PC-3 (cell line): ENCODE measurements at regions of chr19 and their contacts with region 1.

Region 1: DNA sequence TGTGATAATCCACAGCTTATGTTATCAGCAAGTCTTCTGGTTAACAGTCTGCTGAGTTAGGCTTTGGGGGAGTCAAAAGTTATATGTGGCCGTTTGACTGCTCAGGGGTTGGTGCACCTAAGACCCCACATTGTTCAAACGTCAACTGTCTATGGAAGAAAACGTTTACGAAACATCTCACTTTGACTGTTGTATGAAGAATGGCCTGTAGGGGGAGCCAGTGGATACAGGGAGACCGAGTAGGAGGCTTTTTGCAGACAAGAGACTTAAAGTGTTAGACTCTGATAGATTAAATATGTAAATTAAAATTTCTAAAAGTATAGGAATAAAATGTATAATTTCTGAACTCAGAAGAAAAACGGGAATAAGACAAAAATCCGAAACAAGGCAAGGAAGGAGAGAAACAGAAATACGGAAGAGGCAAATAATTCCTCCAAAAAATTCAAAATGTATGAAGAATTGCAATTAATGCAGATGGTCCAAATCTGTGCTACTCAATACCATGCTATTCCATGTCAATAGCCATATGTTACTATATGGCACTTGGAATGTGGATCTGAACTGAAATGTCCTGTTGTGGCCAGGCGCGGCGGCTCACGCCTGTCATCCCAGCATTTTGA is 37.8 kb downstream of the TNFSF14 start:
- DNase-seq: peak; percentile 95
- ATAC-seq: peak; percentile 63
- H3K4me3 ChIP-seq: no peak overlapping the region
- H3K27ac ChIP-seq: no peak overlapping the region
- H3K4me1 ChIP-seq: no peaks in the 10 kb centered on the region
- H3K27me3 ChIP-seq: no peaks in the 10 kb centered on the region
- CTCF ChIP-seq: peak; percentile 88

Region 2: DNA sequence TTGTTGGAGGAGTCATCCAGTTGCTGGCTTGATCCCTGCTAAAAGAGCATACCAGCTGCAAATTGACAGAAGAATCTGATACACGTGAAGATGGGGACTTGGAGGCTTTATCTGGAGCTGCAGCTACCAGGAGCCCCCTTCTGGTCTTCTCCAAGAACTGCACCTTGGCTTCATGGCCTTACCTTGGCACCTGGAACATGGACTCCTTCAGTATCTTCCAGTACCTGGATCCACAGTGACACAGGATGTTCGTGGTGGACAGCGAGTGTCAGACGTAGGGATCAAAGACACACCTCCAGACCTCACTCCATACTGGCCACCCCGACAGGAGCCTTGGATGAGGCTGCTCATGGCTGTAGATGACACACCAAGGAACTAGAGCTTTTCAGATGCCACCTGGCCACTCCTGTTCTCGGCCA is 506.5 kb before region 1 on chr19:
- CTCF ChIA-PET with region 1: no interaction called
- POLR2A ChIA-PET with region 1: no interaction called
- intact Hi-C with region 1: loop called (anchors 2 kb)
- DNase-seq: peak; percentile 95
- ATAC-seq: peak; percentile 90
- H3K4me3 ChIP-seq: no peak overlapping the region
- H3K27ac ChIP-seq: no peak overlapping the region
- H3K4me1 ChIP-seq: no peaks in the 10 kb centered on the region
- H3K27me3 ChIP-seq: no peaks in the 10 kb centered on the region
- CTCF ChIP-seq: peak; percentile 99

Region 3: GRCh38 chr19:6516659-6517291 is 115.3 kb before region 1 on chr19:
- CTCF ChIA-PET with region 1: interaction called, 5 read pairs
- POLR2A ChIA-PET with region 1: no interaction called
- intact Hi-C with region 1: loop called (anchors 1 kb)
- DNase-seq: peak; percentile 93
- ATAC-seq: peak; percentile 86
- H3K4me3 ChIP-seq: peak overlapping the region; percentile 74
- H3K27ac ChIP-seq: no peak overlapping the region
- H3K4me1 ChIP-seq: peaks cover 15% of the 10 kb centered on the region
- H3K27me3 ChIP-seq: no peaks in the 10 kb centered on the region
- CTCF ChIP-seq: peak; percentile 99

Region 4: DNA sequence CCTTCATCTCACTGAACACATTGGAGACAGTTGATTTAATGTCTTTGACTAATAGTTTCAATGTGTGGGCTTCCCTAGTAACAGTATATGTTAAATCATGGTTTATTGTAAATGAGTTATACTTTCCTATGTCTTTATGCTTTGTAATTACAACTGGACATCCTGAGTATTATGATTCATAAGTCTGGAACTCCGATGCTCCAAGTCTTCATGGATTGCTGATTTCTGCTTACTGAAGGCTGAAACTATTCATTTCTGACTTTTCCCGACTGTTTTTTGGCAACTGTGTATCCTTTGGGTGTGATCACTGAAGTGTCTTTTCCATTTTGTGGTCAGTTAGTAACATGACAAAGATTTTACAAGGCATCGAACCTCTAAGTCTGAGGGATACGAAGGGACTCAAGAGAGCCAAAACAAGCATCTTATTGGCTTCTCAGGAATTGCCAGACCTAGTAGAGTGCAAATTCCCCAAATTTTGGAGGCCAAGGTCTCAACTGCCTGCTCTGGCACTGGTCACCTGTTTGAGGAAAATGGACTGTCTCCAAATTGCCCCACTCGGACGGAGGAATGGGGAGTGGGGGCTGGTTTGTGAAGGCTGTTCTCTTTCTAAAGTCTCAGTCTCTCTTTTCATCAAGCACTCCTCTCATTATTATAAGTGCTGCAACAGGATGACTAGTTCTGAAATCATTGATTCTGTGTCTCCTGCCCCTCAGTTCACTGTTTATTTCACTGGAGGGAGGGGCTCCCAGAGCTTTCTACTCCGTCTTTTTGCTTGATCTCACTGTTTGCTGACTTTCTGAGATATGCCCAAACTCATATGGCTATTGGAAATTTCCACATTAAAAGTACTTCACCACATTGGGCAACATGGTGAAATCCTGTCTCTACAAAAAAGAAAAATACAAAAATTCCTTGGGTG is 20.9 kb before region 1 on chr19:
- CTCF ChIA-PET with region 1: no interaction called
- POLR2A ChIA-PET with region 1: no interaction called
- intact Hi-C with region 1: loop called (anchors 2 kb)
- DNase-seq: peak; percentile 98
- ATAC-seq: peak; percentile 85
- H3K4me3 ChIP-seq: peak overlapping the region; percentile 36; the same call in 1 of the 2 replicates
- H3K27ac ChIP-seq: peak overlapping the region; percentile 92
- H3K4me1 ChIP-seq: peaks cover 29% of the 10 kb centered on the region
- H3K27me3 ChIP-seq: no peaks in the 10 kb centered on the region
- CTCF ChIP-seq: no peak

Region 5: DNA sequence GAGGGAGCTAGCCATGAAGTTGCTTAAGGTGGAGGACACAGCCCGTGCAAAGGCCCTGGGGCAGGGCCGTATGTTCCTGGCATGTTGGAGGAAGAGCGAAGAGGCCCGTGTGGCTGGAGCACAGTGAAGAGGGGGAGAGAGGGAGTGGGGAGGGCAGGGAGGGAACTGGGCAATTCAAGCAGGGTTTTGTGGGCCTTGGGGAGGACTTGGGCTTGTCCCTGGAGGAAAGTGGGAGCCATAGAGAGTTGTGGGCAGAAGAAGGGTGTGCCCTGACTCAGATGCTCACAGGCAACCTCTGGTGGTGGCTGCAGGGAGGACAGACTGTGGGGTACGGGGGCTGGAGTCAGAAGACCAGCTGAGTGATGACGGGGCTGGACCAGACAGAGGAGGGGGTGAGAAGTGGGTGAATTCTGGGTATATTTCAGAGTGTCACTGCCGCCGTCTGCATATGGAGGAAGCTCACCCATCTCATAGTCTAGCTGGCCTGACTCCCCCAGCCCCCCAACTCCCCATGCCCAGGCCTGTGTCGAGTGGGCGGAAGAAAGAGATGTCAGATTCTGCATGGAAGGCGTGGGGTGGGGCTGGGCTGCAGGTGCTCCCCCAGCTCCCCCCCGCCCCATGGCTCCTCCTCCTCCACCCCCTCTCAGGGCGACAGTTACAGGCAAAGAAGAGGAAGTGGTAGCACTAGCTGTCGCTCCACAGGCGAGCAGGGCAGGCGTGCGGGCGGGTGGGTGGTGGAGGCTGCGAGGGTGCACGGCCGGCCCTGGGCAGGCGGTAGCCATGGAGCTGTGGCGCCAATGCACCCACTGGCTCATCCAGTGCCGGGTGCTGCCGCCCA is 140.1 kb after region 1 on chr19 and contains the start of gene VAV1:
- CTCF ChIA-PET with region 1: no interaction called
- POLR2A ChIA-PET with region 1: no interaction called
- intact Hi-C with region 1: no loop called
- DNase-seq: no peak
- ATAC-seq: no peak
- H3K4me3 ChIP-seq: no peak within 1 kb of the TSS
- H3K27ac ChIP-seq: no peak within 1 kb of the TSS
- H3K4me1 ChIP-seq: 0 out of 2 replicates have a peak, but pooled peaks cover 5% of the 10 kb centered on the region
- H3K27me3 ChIP-seq: no peaks in the 10 kb centered on the region
- CTCF ChIP-seq: no peak
- total RNA-seq, gene VAV1: 3.0 and 3.2 TPM in 2 replicates

Region 6: DNA sequence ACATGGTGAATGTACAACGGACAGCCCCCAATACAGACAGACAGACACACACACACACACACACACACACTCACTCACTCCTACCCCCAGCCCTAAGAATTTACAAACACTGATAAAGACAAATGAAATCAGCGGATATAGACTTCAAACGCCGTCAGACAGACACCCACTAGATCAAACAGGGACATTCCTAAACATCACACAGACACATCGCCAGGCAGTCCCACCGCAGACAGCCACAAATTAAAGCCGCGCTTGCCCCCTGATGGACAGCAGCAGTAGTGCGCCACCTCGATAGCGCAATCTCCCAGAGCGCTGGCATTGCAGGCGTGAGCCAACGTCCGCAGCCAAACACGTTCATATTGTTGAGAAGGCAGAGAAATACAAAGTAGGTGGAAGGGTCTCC is 230.6 kb after region 1 on chr19:
- CTCF ChIA-PET with region 1: interaction called, 4 read pairs
- POLR2A ChIA-PET with region 1: no interaction called
- intact Hi-C with region 1: loop called (anchors 1 kb)
- DNase-seq: peak; percentile 96
- ATAC-seq: peak; percentile 85
- H3K4me3 ChIP-seq: peak overlapping the region; percentile 35; the same call in 1 of the 2 replicates
- H3K27ac ChIP-seq: no peak overlapping the region
- H3K4me1 ChIP-seq: peaks cover 6% of the 10 kb centered on the region; the same call in 1 of the 2 replicates
- H3K27me3 ChIP-seq: peaks cover 8% of the 10 kb centered on the region
- CTCF ChIP-seq: peak; percentile 98